Activated CD8-positive, alpha-beta T cell treated with anti-CD3 and anti-CD28 coated beads for 36 hours (primary cell): ENCODE measurements at regions of chr11 and their contacts with region 1.

Region 1: GRCh38 chr11:72160319-72160718 is 24.8 kb downstream of the FOLR3 start:
- DNase-seq: no peak
- ATAC-seq: no peak
- H3K4me3 Mint-ChIP-seq: no peak overlapping the region
- H3K27ac Mint-ChIP-seq: no peak overlapping the region
- H3K4me1 Mint-ChIP-seq: no peaks in the 10 kb centered on the region
- H3K27me3 Mint-ChIP-seq: peaks cover 15% of the 10 kb centered on the region
- CTCF ChIP-seq: no peak

Region 2: GRCh38 chr11:72189461-72190275 is 29.3 kb after region 1 on chr11:
- CTCF ChIA-PET with region 1: interaction called, 22 read pairs
- POLR2A ChIA-PET with region 1: no interaction called
- intact Hi-C with region 1: no loop called
- DNase-seq: no peak
- ATAC-seq: no peak
- H3K4me3 Mint-ChIP-seq: no peak overlapping the region
- H3K27ac Mint-ChIP-seq: no peak overlapping the region
- H3K4me1 Mint-ChIP-seq: no peaks in the 10 kb centered on the region
- H3K27me3 Mint-ChIP-seq: no peaks in the 10 kb centered on the region
- CTCF ChIP-seq: no peak

Region 3: GRCh38 chr11:72216638-72217037 is 56.3 kb after region 1 on chr11 and contains the start of gene FOLR2:
- CTCF ChIA-PET with region 1: no interaction called
- POLR2A ChIA-PET with region 1: no interaction called
- intact Hi-C with region 1: no loop called
- DNase-seq: no peak
- ATAC-seq: no peak
- H3K4me3 Mint-ChIP-seq: no peak within 1 kb of the TSS
- H3K27ac Mint-ChIP-seq: no peak within 1 kb of the TSS
- H3K4me1 Mint-ChIP-seq: peaks cover 8% of the 10 kb centered on the region
- H3K27me3 Mint-ChIP-seq: peaks cover 15% of the 10 kb centered on the region
- CTCF ChIP-seq: no peak
- total RNA-seq, gene FOLR2: not detected

Region 4: GRCh38 chr11:72511393-72512047 is 351.2 kb after region 1 on chr11:
- CTCF ChIA-PET with region 1: no interaction called
- POLR2A ChIA-PET with region 1: no interaction called
- intact Hi-C with region 1: no loop called
- DNase-seq: no peak
- ATAC-seq: no peak
- H3K4me3 Mint-ChIP-seq: no peak overlapping the region
- H3K27ac Mint-ChIP-seq: no peak overlapping the region
- H3K4me1 Mint-ChIP-seq: no peaks in the 10 kb centered on the region
- H3K27me3 Mint-ChIP-seq: no peaks in the 10 kb centered on the region
- CTCF ChIP-seq: no peak